ENCODE measurements at regions of chr4 and their contacts with region 1.

Region 1: GRCh38 chr4:113328514-113328913 is 279.1 kb downstream of the ANK2 start:
- DNase-seq: peak; percentile 38 to 48
- H3K4me3 ChIP-seq: no peak overlapping the region
- H3K4me3 Mint-ChIP-seq: no peak overlapping the region
- H3K27ac Mint-ChIP-seq: no peak overlapping the region
- H3K4me1 ChIP-seq: peaks cover 13% of the 10 kb centered on the region
- H3K4me1 Mint-ChIP-seq: peaks cover 11% of the 10 kb centered on the region
- H3K27me3 ChIP-seq: no peaks in the 10 kb centered on the region
- H3K27me3 Mint-ChIP-seq: no peaks in the 10 kb centered on the region
- CTCF ChIP-seq: peak in 1 of 2 experiments; percentile 23

Region 2: GRCh38 chr4:113278324-113278934 is 50.1 kb before region 1 on chr4:
- CTCF ChIA-PET with region 1: no interaction called
- POLR2A ChIA-PET with region 1: no interaction called
- intact Hi-C with region 1: loop called (anchors 1 kb)
- DNase-seq: peak; percentile 67 to 73
- H3K4me3 ChIP-seq: no peak overlapping the region
- H3K4me3 Mint-ChIP-seq: no peak overlapping the region
- H3K27ac Mint-ChIP-seq: no peak overlapping the region
- H3K4me1 ChIP-seq: no peaks in the 10 kb centered on the region
- H3K4me1 Mint-ChIP-seq: no peaks in the 10 kb centered on the region
- H3K27me3 ChIP-seq: no peaks in the 10 kb centered on the region
- H3K27me3 Mint-ChIP-seq: no peaks in the 10 kb centered on the region
- CTCF ChIP-seq: peak; percentile 77 to 78

Region 3: DNA sequence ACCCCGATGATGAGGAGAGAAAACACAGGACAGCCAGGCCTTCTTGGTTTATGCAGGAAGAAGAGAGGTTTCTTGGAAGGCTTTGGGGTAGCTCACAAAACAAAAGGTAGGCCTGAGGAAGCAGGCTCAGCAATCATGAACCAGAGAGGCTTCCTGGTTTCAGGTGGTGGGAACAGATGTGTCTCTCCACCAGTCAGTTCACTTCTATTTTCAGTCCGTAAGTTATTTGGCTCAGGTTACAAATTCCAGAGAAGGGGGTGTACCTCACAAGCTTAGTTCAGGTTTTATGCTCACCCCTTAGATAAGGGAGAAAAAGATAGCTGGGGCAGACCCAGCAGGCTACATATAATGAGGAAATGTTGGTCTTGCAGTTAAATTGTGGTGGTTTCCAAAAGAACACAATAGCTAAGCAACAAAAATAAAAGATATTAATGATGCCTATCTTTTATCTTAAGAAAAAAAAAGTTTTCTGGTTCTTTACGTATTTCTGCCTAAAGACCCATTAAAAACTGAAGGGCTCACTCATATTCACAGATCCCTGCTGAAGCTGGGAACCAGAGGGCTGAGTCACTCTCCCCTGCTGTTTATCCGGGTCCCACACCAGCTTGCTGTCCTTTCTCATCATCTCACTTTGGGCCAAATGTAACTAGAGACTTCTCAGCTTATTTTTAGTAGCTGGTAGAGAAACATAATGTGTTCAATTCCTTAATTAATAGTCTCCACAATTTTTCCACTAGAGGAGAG is 256.1 kb after region 1 on chr4:
- CTCF ChIA-PET with region 1: no interaction called
- POLR2A ChIA-PET with region 1: no interaction called
- intact Hi-C with region 1: no loop called
- DNase-seq: peak; percentile 26 to 30
- H3K4me3 ChIP-seq: no peak overlapping the region
- H3K4me3 Mint-ChIP-seq: peak overlapping the region; percentile 34
- H3K27ac Mint-ChIP-seq: peak overlapping the region; percentile 90
- H3K4me1 ChIP-seq: peaks cover 13% of the 10 kb centered on the region
- H3K4me1 Mint-ChIP-seq: peaks cover 20% of the 10 kb centered on the region
- H3K27me3 ChIP-seq: no peaks in the 10 kb centered on the region
- H3K27me3 Mint-ChIP-seq: no peaks in the 10 kb centered on the region
- CTCF ChIP-seq: no peak